Heart left ventricle (tissue), 16 donors: ENCODE measurements at regions of chr11 and their contacts with region 1.

Region 1: DNA sequence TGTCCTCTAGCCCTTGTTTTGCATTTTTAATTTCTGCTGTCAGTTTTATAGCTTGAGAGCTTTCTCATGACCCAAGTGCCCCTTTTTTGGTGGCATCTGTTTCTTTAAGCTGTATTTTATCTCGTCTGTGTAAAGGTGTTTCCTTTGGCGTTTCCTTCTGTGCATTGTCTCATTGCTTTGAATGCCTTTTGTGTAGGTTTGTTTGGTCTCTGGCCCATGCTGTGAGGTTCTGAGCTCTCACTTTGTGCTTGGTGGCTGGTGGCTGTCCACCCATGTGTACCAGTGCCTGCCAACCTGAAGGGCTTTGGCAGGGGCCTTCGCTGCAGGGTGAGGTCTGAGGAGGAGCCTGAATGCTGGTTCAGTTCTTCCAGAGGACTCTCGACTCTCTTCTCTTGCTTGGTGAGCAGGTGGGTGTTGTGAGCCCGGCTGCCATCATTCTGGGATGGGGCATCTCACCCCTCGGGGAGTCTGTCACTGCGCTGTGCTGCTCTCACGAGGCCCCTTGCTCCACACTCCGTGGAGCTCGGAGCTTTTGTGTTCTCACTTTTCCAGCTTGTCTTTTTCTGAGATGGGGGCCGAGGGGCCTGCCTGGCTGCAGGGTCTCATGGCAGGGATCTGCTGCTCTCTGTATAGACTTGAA is 14.9 kb downstream of the AP2A2 start:
- DNase-seq: peak in 1 of 5 donors; percentile 50
- ATAC-seq: peak in 3 of 4 donors; percentile 30 to 56 (median 42)
- H3K4me3 ChIP-seq: no peak overlapping the region
- H3K27ac ChIP-seq: peak overlapping the region in 2 of 12 donors; percentile 5 to 9
- H3K4me1 ChIP-seq: peaks cover 0 to 66% (median 22%) of the 10 kb centered on the region in 12 donors
- H3K27me3 ChIP-seq: no peaks in the 10 kb centered on the region
- CTCF ChIP-seq: no peak
- POLR2A ChIP-seq: no peak

Region 2: DNA sequence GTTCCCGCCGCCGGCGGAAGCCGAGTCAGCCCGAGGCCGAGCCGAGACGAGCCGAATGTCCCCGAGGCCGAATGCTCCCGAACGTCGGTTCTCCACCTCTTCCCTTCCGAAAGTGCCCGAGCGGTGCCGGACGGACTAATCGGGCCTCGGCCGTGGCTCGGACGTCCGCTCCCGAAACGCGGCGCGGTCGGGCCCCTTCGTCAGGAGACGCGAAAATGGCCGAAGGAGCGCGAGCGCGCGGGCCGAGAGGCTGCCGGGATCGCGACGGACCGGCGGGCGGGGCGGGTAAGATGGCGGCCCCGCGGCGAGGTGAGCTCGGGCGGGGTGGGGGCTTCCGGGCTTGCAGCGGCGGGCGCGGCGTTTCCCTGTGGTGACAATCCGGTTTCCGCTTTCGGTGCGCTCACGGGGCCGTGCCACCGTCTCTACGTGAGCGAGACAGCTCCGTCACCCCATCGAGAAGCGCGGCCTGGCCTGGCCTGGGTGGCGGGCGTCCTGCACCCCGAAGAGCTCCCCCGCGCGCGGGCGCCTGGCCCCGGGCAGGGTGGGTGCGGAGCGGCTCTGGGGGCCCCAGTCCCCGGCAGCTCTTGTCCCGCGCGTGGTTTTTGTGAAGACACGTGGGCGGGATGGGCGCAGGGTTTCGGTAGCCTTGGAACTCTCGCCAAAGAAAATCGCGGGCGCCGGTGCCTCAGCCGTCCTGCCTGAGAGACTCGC is 244.9 kb before region 1 on chr11 and contains the start of gene TMEM80:
- intact Hi-C with region 1: no loop called
- DNase-seq: peak; percentile 99 to 100 (median 100)
- ATAC-seq: peak; percentile 87 to 93 (median 90)
- H3K4me3 ChIP-seq: peak within 1 kb of the TSS; percentile 61 to 99 (median 94)
- H3K27ac ChIP-seq: peak within 1 kb of the TSS; percentile 98 to 100 (median 100)
- H3K4me1 ChIP-seq: peaks cover 8 to 45% (median 32%) of the 10 kb centered on the region in 12 donors
- H3K27me3 ChIP-seq: no peaks in the 10 kb centered on the region
- CTCF ChIP-seq: no peak
- POLR2A ChIP-seq: peak in 1 of 2 donors; percentile 76
- total RNA-seq, gene TMEM80: 8.9 to 18.2 (median 15.0) TPM

Region 3: GRCh38 chr11:952406-953385 is 12.1 kb after region 1 on chr11:
- intact Hi-C with region 1: loop called in 1 of 10 experiments (anchors 1 kb)
- DNase-seq: peak in 1 of 5 donors; percentile 20
- ATAC-seq: peak in 3 of 4 donors; percentile 53 to 72 (median 61)
- H3K4me3 ChIP-seq: no peak overlapping the region
- H3K27ac ChIP-seq: no peak overlapping the region
- H3K4me1 ChIP-seq: peaks cover 0 to 32% (median 9%) of the 10 kb centered on the region in 12 donors
- H3K27me3 ChIP-seq: no peaks in the 10 kb centered on the region
- CTCF ChIP-seq: no peak
- POLR2A ChIP-seq: no peak